GM12878 (cell line): ENCODE measurements at regions of chr4 and their contacts with region 1.

Region 1: DNA sequence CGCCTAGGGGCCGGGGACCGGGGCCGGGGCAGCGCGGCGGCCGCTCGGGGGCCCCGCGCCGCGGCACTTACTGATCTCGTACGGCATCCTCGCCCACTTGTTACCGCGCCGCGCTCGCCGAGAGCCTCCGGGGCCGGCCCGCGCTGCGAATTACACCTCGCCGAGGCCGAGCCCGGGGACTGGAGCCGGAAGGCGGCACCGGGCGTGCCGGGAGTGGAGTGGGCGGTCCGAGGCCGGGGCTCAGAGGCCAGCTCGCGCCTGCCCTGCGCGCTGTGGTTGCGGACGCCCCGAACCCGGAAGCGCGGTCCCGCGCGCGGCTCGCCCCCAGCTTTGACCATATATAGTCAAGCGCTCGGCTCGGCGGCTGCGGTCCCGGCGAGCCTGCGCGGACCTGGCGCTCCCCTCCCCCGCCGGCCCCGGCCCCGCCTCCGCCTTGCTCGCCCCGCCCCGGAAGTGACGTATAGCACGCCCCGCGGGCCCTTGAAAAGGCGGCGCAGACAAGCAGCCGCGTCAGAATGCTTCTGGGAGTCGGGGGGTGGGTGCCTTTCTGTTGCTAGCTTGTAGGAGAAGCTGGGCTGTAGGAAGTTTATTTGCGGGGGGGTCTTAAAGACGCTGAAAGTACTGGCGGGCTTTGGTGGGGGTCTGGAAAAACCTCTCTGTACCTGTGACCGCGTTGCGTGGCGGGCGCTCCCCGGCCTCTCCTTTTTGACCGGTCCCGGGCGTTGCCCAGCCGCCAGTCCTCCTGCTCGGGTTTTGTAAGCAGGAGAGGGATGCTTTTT is at the start of gene WDR1:
- DNase-seq: peak; percentile 71
- ATAC-seq: peak; percentile 92
- H3K4me3 ChIP-seq: peak within 1 kb of the TSS; percentile 99
- H3K27ac ChIP-seq: peak within 1 kb of the TSS; percentile 92
- H3K4me1 ChIP-seq: peaks cover 17% of the 10 kb centered on the region
- H3K27me3 ChIP-seq: no peaks in the 10 kb centered on the region
- CTCF ChIP-seq: no peak
- EP300 ChIP-seq: no peak
- POLR2A ChIP-seq: peak; percentile 91
- RAD21 ChIP-seq: no peak
- polyA plus RNA-seq, gene WDR1: 28.5 to 57.1 TPM

Region 2: DNA sequence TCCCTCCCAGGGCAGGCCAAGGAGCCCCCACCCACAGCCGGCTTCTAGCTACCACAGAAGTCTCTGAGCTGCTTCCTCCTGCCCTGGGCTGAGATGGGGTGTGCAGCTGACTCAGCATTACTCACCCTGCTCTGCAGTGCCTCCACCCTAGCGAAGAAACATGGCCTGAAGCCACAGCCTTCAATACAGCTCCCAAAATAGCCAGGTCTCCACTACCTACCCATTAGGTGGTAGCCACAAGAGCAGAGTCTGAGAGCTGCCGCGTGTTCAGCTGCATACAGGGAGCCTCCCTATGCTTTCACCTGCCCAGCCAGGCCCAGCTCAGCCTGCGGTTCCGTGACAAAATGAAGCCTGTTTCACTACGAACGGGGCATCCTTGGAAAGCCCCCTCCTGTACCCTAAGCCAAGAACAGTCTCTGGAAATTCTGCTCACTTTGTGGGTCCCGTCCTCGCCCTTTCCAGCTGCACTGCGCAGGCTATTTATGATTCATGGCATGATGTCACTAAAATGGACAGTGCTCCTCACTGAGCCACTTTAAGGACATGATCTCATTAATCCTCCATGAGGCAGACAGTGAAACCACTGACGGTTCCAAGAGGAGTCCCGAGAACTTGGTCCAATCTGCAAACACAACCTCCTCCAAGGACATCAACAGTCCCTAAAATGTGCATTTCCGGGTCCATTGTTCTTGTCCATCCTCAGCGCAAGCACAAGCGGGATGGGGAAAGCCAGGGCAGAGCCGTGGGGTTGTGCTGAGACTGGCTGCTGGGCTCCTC is 20.4 kb before region 1 on chr4:
- CTCF ChIA-PET with region 1: interaction called, 4 read pairs
- POLR2A ChIA-PET with region 1: interaction called, 32 read pairs
- RAD21 ChIA-PET with region 1: interaction called, 12 read pairs
- SMC1A ChIA-PET with region 1: interaction called, 7 read pairs
- in situ Hi-C with region 1: no loop called
- intact Hi-C with region 1: no loop called
- DNase-seq: peak; percentile 60
- ATAC-seq: peak; percentile 79
- H3K4me3 ChIP-seq: no peak overlapping the region
- H3K27ac ChIP-seq: peak overlapping the region; percentile 76
- H3K4me1 ChIP-seq: peaks cover 40% of the 10 kb centered on the region
- H3K27me3 ChIP-seq: no peaks in the 10 kb centered on the region
- CTCF ChIP-seq: no peak
- EP300 ChIP-seq: no peak
- POLR2A ChIP-seq: peak; percentile 64
- RAD21 ChIP-seq: no peak

Region 3: DNA sequence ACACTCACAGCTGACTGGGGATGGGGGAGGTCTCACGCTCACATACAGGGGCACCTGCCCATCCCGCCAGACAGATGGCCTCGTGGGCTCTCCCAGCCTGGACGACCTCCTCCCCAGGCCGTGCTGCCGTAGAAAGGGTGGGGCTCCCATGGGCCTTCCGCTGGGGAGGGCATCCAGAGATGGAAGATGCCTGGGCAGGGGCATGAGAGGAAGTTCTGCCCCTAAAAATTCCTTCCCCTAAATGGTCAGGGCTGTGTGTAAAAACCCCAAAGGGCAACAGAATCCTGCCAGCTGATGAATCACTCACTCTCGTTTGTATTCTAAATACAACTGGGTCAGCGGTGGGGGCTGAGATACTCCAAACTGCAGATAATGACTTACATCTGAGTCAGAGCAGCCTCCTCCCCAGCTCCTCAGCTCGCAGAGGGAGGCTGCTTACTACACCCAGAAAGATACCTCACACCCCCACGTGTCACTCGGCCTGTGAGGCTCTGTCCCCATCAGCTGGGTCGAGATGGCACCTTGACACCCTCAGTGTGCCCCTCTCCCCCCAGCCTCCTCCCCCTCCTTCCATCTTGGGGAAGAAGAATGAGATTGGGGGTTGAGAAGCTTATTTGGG is 10.2 kb before region 1 on chr4:
- CTCF ChIA-PET with region 1: interaction called, 6 read pairs
- POLR2A ChIA-PET with region 1: interaction called, 18 read pairs
- RAD21 ChIA-PET with region 1: interaction called, 7 read pairs
- SMC1A ChIA-PET with region 1: interaction called, 6 read pairs
- in situ Hi-C with region 1: no loop called
- intact Hi-C with region 1: no loop called
- DNase-seq: no peak
- ATAC-seq: peak; percentile 66
- H3K4me3 ChIP-seq: peak overlapping the region; percentile 27; the same call in 1 of the 2 replicates
- H3K27ac ChIP-seq: no peak overlapping the region
- H3K4me1 ChIP-seq: peaks cover 9% of the 10 kb centered on the region; the same call in 1 of the 2 replicates
- H3K27me3 ChIP-seq: no peaks in the 10 kb centered on the region
- CTCF ChIP-seq: no peak
- EP300 ChIP-seq: no peak
- POLR2A ChIP-seq: no peak
- RAD21 ChIP-seq: no peak

Region 4: DNA sequence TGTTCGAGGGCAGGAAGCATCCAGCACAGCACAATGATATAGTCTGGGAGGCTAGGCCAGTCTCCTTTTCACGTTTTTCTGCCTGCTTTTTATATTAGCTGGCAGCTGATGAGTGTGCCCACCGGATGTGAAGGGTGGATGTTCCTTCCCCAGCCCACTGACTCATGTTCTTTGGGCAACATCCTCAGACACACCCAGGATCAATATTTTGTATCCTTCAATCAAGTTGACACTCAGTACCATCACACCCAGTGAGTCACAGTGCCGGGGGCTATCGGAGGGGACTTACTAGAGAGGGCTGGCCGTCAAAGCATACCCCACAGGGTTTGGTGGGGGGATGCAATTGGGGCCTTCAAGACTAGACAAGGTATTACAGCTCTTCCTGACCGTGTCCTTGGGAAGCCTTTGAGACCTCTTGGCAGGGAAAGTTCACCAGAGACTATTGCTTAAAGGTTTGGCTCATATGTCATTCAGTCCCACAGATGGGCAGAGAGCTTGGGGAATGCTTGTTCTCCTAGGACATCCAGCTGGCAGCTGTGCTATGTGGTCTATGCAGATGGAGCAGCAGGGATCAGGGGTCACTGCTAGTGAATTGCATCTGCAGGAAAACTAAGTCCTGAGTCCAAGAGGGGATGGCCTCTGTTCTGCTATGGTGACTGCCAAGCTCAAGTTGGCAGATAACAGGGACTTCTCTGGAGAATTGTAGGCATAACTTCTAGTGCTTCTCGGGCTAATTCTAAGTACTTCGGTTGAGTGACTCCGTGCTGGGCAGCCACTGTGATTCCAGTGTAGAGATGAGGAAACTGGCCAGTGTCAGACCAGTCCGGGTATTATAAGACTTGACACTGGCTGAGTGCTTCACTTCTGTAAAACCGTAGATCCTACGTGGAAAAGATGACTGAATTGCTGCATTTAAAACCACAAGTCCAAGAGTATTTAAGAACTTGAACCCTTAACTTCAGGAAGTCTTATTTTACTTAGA is 12.7 kb after region 1 on chr4:
- CTCF ChIA-PET with region 1: interaction called, 4 read pairs
- POLR2A ChIA-PET with region 1: interaction called, 6 read pairs
- RAD21 ChIA-PET with region 1: interaction called, 16 read pairs
- SMC1A ChIA-PET with region 1: interaction called, 18 read pairs
- in situ Hi-C with region 1: no loop called
- intact Hi-C with region 1: no loop called
- DNase-seq: no peak
- ATAC-seq: 0 out of 3 replicates have a peak, but pooled peaks have one; percentile 27
- H3K4me3 ChIP-seq: no peak overlapping the region
- H3K27ac ChIP-seq: no peak overlapping the region
- H3K4me1 ChIP-seq: no peaks in the 10 kb centered on the region
- H3K27me3 ChIP-seq: no peaks in the 10 kb centered on the region; a peak in 1 of 4 replicates
- CTCF ChIP-seq: no peak
- EP300 ChIP-seq: no peak
- POLR2A ChIP-seq: no peak
- RAD21 ChIP-seq: no peak